ENCODE measurements at regions of chr1 and their contacts with region 1.

Region 1: DNA sequence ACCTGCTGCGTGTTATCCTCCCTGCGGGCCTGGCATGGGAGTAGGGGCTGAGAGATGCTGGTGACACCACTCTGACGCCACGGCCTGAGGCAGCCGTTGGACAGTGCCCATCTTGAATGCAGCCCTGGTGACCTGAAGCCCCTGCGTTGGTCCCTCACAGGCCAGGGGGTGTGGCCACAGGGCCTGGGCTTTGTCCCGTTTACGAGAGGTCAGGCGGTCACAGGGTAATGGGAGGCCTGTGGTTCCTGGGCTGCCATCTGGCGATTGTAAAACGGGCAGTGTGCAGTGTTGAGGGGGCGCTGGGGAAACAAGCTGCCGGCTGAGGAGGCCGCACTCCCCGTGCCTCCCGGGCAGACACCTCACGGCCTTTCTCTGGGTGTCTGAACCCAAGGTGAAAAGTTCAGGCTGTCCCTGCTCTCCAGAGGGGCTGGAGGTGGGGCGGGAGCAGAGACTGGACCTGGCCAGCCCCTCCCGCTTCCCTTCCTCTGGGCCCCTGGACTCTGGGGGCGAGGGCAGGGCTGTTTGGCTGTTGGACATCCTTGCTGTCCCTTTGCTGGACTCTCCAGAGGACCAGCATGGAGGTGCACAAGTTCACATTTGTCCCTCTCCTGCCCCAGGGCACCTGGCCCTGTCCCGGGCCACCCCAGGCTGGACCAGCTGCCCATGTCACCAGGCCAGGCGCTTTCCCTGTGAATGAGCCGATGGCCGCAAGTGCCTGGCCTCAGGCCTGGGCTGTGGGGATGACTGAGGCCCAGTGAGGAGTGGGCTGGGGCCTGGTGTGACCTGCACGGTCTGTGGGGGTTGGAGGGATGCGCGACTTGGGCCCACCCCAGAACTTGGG is 42.4 kb downstream of the SKI start:
- DNase-seq: no peak
- H3K4me3 ChIP-seq: peak overlapping the region; percentile 5 to 32
- H3K27ac ChIP-seq: peak overlapping the region; percentile 40
- H3K4me1 ChIP-seq: peaks cover 100% of the 10 kb centered on the region
- H3K27me3 ChIP-seq: no peaks in the 10 kb centered on the region
- CTCF ChIP-seq: no peak
- POLR2A ChIP-seq: no peak

Region 2: DNA sequence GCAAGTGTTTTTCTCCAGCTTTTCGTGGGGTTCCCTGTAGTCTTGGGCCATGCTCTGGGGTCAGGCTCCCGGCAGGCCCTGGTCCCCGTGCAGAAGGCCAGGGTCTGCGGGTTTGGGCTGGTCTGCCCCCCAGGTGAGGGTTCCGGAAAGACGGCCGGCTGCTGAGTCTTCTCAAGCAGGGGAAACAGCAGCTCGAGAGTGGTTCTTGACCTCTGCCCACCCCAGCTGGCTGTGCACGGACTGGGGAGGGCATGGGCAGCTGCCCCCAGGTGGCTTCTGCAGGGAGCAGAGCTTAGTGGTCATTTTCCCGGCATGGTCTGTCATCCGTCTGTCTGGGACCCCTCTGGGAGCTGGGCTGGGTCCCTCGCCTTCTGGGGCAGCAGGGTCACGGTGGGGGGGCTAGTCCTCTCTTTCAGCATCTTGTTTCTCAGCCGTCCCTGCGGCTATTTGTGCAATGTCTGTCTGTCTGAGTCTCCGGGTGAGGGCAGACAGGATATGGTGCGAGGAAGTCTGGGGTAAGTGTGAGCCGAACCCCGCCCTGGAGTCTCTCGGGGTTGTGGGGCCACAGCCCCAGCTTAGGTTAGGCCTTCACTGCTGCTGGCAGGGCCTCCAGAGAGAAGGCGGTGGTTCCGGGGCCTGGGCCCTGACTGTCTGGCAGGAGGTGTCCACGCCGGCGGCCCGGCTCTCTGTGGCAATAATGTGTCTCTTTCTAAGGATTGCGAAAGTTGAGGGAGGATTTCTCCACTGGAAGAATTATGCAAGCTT is 36.3 kb before region 1 on chr1:
- intact Hi-C with region 1: loop called (anchors 5 kb)
- DNase-seq: peak in 1 of 2 donors; percentile 98
- H3K4me3 ChIP-seq: peak overlapping the region; percentile 60 to 63
- H3K27ac ChIP-seq: peak overlapping the region; percentile 96
- H3K4me1 ChIP-seq: peaks cover 99% of the 10 kb centered on the region
- H3K27me3 ChIP-seq: no peaks in the 10 kb centered on the region
- CTCF ChIP-seq: no peak
- POLR2A ChIP-seq: no peak